PC-9 (cell line): ENCODE measurements at regions of chr20 and their contacts with region 1.

Region 1: DNA sequence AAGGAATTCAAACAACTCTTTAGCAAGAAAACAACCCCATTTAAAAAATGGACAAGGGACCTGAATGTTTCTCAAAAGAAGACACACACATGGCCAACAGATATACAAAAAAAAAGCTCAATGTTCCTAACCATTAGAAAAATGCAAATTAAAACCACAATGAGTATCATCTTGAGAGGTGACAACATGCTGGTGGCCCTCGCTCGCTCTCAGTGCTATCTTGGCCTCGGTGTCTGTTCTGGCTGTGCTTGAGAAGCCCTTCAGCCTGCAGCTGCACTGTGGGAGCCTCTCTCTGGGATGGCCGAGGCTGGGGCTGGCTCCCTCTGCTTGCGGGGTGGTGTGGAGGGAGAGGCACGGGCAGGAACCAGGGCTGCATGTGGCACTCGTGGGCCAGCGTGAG is 13.4 kb downstream of the SPINT4 start:
- DNase-seq: no peak
- H3K4me3 ChIP-seq: no peak overlapping the region
- H3K27ac ChIP-seq: no peak overlapping the region
- H3K4me1 ChIP-seq: no peaks in the 10 kb centered on the region
- H3K27me3 ChIP-seq: no peaks in the 10 kb centered on the region
- CTCF ChIP-seq: no peak

Region 2: GRCh38 chr20:45611054-45611453 is 124.5 kb before region 1 on chr20:
- CTCF ChIA-PET with region 1: interaction called, 18 read pairs
- POLR2A ChIA-PET with region 1: no interaction called
- intact Hi-C with region 1: no loop called
- DNase-seq: no peak
- H3K4me3 ChIP-seq: no peak overlapping the region
- H3K27ac ChIP-seq: no peak overlapping the region
- H3K4me1 ChIP-seq: no peaks in the 10 kb centered on the region
- H3K27me3 ChIP-seq: no peaks in the 10 kb centered on the region
- CTCF ChIP-seq: no peak

Region 3: DNA sequence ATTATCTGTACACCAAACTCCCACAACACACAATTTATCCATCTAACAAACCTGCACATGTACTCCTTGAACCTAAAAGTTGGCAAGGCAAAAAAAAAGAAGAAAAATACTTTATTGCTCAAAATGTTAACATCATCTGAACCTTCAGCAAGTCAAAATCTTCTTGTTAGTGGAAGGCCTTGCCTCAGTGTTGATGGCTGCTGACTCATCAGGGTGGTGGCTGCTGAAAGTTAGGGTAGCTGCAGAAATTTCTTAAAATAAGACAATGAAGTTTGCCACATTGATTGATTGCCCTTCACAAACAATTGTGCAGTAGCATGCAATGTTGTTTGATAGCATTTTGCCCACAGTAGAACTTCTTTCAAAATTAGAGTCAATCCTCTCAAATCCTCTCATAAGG is 62.8 kb before region 1 on chr20:
- CTCF ChIA-PET with region 1: no interaction called
- POLR2A ChIA-PET with region 1: no interaction called
- intact Hi-C with region 1: loop called (anchors 10 kb)
- DNase-seq: no peak
- H3K4me3 ChIP-seq: no peak overlapping the region
- H3K27ac ChIP-seq: no peak overlapping the region
- H3K4me1 ChIP-seq: no peaks in the 10 kb centered on the region
- H3K27me3 ChIP-seq: peaks cover 9% of the 10 kb centered on the region; the same call in 1 of the 2 replicates
- CTCF ChIP-seq: no peak

Region 4: DNA sequence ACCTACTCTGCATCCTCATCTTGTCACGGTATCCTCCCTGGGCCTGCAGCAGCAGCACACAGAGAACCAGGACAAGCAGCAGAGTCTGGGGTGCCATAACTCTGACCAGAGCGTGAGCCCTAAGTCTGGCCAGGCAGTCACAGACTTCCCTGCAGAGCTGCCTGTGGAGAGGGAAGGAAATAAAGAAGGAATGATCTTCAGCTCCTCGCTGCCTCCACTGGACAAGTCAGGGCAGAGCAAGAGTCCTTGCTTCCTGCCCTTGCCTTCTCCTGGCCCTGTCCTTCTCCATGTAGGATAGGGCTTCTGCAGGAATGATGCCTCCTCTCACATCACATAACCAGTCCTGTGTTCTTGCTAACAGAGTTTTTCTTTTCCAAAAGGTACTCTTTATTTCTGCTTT is 49.7 kb before region 1 on chr20:
- CTCF ChIA-PET with region 1: no interaction called
- POLR2A ChIA-PET with region 1: no interaction called
- intact Hi-C with region 1: no loop called
- DNase-seq: no peak
- H3K4me3 ChIP-seq: no peak overlapping the region
- H3K27ac ChIP-seq: no peak overlapping the region
- H3K4me1 ChIP-seq: no peaks in the 10 kb centered on the region
- H3K27me3 ChIP-seq: peaks cover 16% of the 10 kb centered on the region; the same call in 1 of the 2 replicates
- CTCF ChIP-seq: no peak

Region 5: GRCh38 chr20:46004889-46005473 is 269.4 kb after region 1 on chr20:
- CTCF ChIA-PET with region 1: no interaction called
- POLR2A ChIA-PET with region 1: no interaction called
- intact Hi-C with region 1: no loop called
- DNase-seq: peak; percentile 39 to 46
- H3K4me3 ChIP-seq: no peak overlapping the region
- H3K27ac ChIP-seq: no peak overlapping the region
- H3K4me1 ChIP-seq: peaks cover 23% of the 10 kb centered on the region
- H3K27me3 ChIP-seq: no peaks in the 10 kb centered on the region
- CTCF ChIP-seq: no peak